ENCODE measurements at regions of chr6 and their contacts with region 1.

Region 1: GRCh38 chr6:12289933-12290820 is at the start of gene EDN1:
- DNase-seq: peak; percentile 86 to 92
- ATAC-seq: peak; percentile 92
- H3K4me3 ChIP-seq: peak within 1 kb of the TSS; percentile 76 to 93
- H3K27ac ChIP-seq: peak within 1 kb of the TSS in 1 of 2 donors; percentile 88
- H3K4me1 ChIP-seq: no peaks in the 10 kb centered on the region
- H3K27me3 ChIP-seq: no peaks in the 10 kb centered on the region
- total RNA-seq, gene EDN1: 3.4 to 10.0 TPM

Region 2: GRCh38 chr6:12097791-12098190 is 192.4 kb before region 1 on chr6:
- intact Hi-C with region 1: no loop called
- DNase-seq: no peak
- ATAC-seq: no peak
- H3K4me3 ChIP-seq: no peak overlapping the region
- H3K27ac ChIP-seq: no peak overlapping the region
- H3K4me1 ChIP-seq: no peaks in the 10 kb centered on the region
- H3K27me3 ChIP-seq: no peaks in the 10 kb centered on the region

Region 3: GRCh38 chr6:12112540-12113189 is 177.5 kb before region 1 on chr6:
- intact Hi-C with region 1: no loop called
- DNase-seq: no peak
- ATAC-seq: no peak
- H3K4me3 ChIP-seq: no peak overlapping the region
- H3K27ac ChIP-seq: no peak overlapping the region
- H3K4me1 ChIP-seq: no peaks in the 10 kb centered on the region
- H3K27me3 ChIP-seq: no peaks in the 10 kb centered on the region

Region 4: DNA sequence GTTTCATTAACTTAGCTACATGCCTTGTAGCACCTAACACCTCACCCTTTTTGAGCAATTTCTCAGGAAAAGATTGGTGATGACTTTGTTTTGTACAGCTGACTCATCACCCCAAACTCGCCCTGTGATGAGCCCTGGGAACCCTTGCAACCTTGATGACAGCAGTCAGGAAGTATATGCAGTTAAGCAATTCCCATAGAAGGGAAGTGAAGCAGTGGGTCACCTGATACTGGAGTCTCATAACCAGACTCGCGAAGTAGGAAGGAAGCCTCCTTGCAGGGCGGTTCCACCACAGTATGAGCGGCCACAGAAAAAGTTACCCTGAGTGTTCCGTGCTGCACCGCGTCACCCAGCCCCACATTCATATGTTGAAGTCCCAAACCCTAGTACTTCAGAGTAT is 82.0 kb before region 1 on chr6:
- intact Hi-C with region 1: no loop called
- DNase-seq: peak in 1 of 2 donors; percentile 55
- ATAC-seq: no peak
- H3K4me3 ChIP-seq: no peak overlapping the region
- H3K27ac ChIP-seq: no peak overlapping the region
- H3K4me1 ChIP-seq: no peaks in the 10 kb centered on the region
- H3K27me3 ChIP-seq: no peaks in the 10 kb centered on the region

Region 5: GRCh38 chr6:12348530-12349511 is 58.6 kb after region 1 on chr6:
- intact Hi-C with region 1: loop called (anchors 5 to 10 kb)
- DNase-seq: no peak
- ATAC-seq: no peak
- H3K4me3 ChIP-seq: no peak overlapping the region
- H3K27ac ChIP-seq: peak overlapping the region; percentile 82 to 89
- H3K4me1 ChIP-seq: peaks cover 6 to 7% of the 10 kb centered on the region in 2 donors
- H3K27me3 ChIP-seq: no peaks in the 10 kb centered on the region

Region 6: DNA sequence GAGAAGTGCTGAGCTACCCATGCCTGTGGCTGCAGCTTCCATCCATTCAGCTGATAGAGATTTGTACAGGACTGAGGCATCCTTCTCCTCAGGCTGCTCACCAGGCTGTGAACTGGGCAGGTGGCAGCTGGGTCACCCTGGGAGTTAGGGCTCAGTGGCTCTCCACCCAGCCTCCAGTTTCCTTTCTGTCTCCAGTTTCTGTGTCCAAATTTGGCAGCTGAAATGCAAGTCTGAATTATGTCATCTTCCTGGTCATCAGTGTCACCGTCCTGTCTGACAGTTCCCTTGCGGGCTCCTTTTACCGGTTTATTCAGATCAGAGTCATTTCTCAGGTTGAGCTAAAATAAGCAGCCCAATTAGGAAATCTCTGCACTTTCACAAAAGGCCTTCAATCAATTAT is 93.3 kb after region 1 on chr6:
- intact Hi-C with region 1: loop called in 1 of 2 experiments (anchors 5 kb)
- DNase-seq: no peak
- ATAC-seq: no peak
- H3K4me3 ChIP-seq: no peak overlapping the region
- H3K27ac ChIP-seq: peak overlapping the region in 1 of 2 donors; percentile 25
- H3K4me1 ChIP-seq: peaks cover 8 to 11% of the 10 kb centered on the region in 2 donors
- H3K27me3 ChIP-seq: no peaks in the 10 kb centered on the region

Region 7: DNA sequence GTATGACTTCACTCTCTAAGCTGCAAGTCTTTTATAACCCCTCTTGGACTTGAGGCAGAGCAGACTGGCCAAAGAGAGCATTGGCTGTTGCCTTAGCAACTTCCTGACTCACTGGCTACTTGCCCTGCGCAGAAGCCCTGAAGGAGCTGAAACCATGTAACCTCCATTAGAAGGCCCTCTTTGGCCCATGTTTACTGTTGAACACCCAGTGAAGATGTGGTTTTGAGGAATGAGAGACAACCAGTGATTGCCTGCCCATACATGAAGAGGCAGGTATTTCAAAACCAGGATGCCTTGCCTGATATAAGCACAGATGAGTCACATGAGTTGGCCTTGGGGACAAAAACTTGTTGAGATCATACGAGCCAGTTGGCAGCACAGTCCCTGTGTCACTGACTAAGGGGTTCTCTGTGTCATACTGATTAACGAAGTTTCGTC is 182.4 kb after region 1 on chr6:
- intact Hi-C with region 1: loop called in 1 of 2 experiments (anchors 10 kb)
- DNase-seq: peak; percentile 81 to 87
- ATAC-seq: peak; percentile 92
- H3K4me3 ChIP-seq: no peak overlapping the region
- H3K27ac ChIP-seq: peak overlapping the region; percentile 4 to 99
- H3K4me1 ChIP-seq: peaks cover 9 to 11% of the 10 kb centered on the region in 2 donors
- H3K27me3 ChIP-seq: no peaks in the 10 kb centered on the region

Region 8: GRCh38 chr6:12545619-12546409 is 255.6 kb after region 1 on chr6:
- intact Hi-C with region 1: loop called in 1 of 2 experiments (anchors 5 kb)
- DNase-seq: no peak
- ATAC-seq: no peak
- H3K4me3 ChIP-seq: no peak overlapping the region
- H3K27ac ChIP-seq: peak overlapping the region in 1 of 2 donors; percentile 73
- H3K4me1 ChIP-seq: peaks cover 1 to 6% of the 10 kb centered on the region in 2 donors
- H3K27me3 ChIP-seq: no peaks in the 10 kb centered on the region

Region 9: DNA sequence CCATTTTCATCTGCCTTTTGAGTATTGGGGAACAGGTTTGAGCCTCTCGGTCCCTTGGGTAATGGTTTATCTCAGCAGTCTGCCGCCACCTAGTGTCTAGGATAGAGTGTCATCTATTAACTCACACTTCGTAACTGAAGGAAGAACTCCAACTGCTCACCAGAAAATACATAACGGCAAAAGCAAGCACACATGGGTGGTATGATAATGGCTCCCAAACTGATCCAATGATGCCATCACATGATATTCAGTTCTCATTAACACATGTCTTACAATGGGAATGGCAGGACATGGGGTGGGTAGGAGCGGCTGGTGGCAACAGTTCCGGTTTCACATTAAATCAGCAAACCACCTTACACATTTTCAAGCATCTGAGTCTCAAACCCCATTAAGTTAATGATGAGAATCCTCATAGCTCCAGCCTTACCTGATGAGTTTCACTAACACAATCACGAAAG is 315.7 kb after region 1 on chr6:
- intact Hi-C with region 1: loop called (anchors 2 to 5 kb)
- DNase-seq: no peak
- ATAC-seq: peak; percentile 73
- H3K4me3 ChIP-seq: no peak overlapping the region
- H3K27ac ChIP-seq: no peak overlapping the region
- H3K4me1 ChIP-seq: peaks cover 3 to 14% of the 10 kb centered on the region in 2 donors
- H3K27me3 ChIP-seq: no peaks in the 10 kb centered on the region

Region 10: DNA sequence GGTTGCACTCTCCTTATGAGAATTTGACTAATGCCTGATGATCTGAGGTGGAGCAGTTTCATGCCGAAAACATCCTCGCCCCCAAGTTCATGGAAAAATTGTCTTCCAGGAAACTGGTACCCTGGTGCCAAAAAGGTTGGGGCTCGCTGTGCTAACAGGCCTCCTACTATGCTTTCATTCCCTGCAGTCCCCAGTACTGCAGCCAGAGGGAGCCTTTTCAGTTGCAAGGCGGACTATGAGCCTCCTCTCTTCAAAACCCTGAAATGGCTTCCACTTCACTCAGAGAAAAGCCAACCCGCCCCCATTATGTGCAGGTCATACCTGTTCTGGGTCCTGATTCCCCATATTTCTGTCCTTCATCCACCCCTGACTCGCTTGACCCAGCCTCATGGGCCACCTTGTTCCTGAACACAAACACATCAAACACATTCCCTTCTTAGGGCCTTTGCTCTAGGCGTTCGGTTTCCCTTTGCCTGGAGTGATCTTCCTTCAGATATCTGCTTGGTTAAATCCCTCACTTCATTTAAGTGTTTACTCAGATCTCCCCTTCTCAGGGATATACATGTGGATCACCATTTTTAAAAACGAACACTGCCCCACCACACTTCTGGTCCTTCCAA is 600.1 kb after region 1 on chr6:
- intact Hi-C with region 1: loop called in 1 of 2 experiments (anchors 10 kb)
- DNase-seq: no peak
- ATAC-seq: no peak
- H3K4me3 ChIP-seq: no peak overlapping the region
- H3K27ac ChIP-seq: no peak overlapping the region
- H3K4me1 ChIP-seq: no peaks in the 10 kb centered on the region
- H3K27me3 ChIP-seq: peaks cover 0 to 3% of the 10 kb centered on the region in 2 donors